BJ (cell line): ENCODE measurements at regions of chr13 and their contacts with region 1.

Region 1: GRCh38 chr13:51885651-51886050 is 23.9 kb downstream of the CCDC70 start:
- DNase-seq: no peak
- H3K4me3 ChIP-seq: no peak overlapping the region
- H3K27me3 ChIP-seq: 0 out of 2 replicates have a peak, but pooled peaks cover 2% of the 10 kb centered on the region
- CTCF ChIP-seq: no peak

Region 2: GRCh38 chr13:51895906-51896888 is 10.5 kb after region 1 on chr13:
- CTCF ChIA-PET with region 1: interaction called, 17 read pairs
- POLR2A ChIA-PET with region 1: no interaction called
- DNase-seq: peak; percentile 1
- H3K4me3 ChIP-seq: no peak overlapping the region
- H3K27me3 ChIP-seq: no peaks in the 10 kb centered on the region; the same call in 1 of the 2 replicates
- CTCF ChIP-seq: peak; percentile 86

Region 3: DNA sequence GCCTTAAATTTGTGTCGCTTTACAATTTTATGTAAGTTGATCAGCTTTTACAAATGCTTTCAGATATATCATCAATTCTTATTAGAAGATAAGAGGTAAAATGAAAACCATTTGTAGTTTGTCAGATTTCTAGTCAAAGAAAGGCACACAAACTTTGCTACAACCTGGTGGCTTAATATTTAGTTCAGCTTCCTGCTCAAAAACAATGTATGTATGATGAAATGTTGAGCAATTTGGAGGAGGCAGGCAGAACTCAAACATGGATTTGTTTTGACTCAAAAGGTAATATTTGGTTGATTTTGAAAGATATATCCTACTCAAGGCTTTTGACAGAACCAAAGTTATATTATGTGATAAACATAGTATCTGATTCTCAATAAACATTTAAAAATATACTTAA is 219.0 kb after region 1 on chr13:
- CTCF ChIA-PET with region 1: no interaction called
- POLR2A ChIA-PET with region 1: no interaction called
- DNase-seq: no peak
- H3K4me3 ChIP-seq: no peak overlapping the region
- H3K27me3 ChIP-seq: no peaks in the 10 kb centered on the region; the same call in 1 of the 2 replicates
- CTCF ChIP-seq: no peak